GM10248 (cell line): ENCODE measurements at regions of chr16 and their contacts with region 1.

Region 1: GRCh38 chr16:19168371-19169081 is 486 bp downstream of the SYT17 start:
- DNase-seq: peak; percentile 47
- CTCF ChIP-seq: no peak

Region 2: GRCh38 chr16:19179546-19180490 is 11.3 kb after region 1 on chr16:
- CTCF ChIA-PET with region 1: interaction called, 16 read pairs
- POLR2A ChIA-PET with region 1: no interaction called
- DNase-seq: peak; percentile 81
- CTCF ChIP-seq: peak; percentile 45